H1 (cell line): ENCODE measurements at regions of chr20 and their contacts with region 1.

Region 1: GRCh38 chr20:49541733-49542513 is 26.0 kb downstream of the PTGIS start:
- DNase-seq: peak in 1 of 2 experiments; percentile 86
- H3K4me3 ChIP-seq: no peak overlapping the region
- H3K27ac ChIP-seq: no peak overlapping the region
- H3K4me1 ChIP-seq: no peaks in the 10 kb centered on the region
- H3K27me3 ChIP-seq: no peaks in the 10 kb centered on the region
- CTCF ChIP-seq: peak; percentile 60 to 99 (median 90)
- EP300 ChIP-seq: no peak
- POLR2A ChIP-seq: no peak
- RAD21 ChIP-seq: peak; percentile 93 to 94

Region 2: DNA sequence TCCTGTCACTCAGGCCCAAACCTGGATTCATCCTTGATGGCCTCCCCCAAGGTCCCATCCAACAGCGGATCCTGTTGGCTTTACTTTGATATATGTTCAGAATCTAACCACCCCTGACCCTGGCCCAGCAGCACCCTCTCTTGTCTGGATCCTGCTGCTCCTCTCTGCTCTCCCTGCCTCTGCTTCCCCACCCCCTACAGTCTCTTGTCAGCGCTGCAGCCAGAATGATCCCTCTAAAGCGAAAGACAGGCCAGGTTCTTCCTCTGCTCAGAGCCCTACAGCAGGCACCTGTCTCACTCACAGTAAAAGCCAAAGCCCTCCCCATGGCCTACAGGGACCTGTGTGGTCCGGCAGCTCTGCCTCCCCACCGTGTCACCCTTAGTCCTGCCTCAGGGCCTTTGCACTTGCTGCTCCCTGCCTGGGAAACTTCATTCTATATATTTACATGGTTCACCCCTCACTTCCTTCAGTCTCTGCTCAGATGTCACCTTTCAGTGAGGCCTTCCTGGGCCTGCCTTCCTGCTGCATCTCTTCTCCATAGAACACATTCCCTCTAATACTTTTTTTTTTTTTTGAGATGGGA is 22.1 kb before region 1 on chr20:
- CTCF ChIA-PET with region 1: interaction called, 21 read pairs
- POLR2A ChIA-PET with region 1: interaction called, 3 read pairs
- DNase-seq: no peak
- H3K4me3 ChIP-seq: no peak overlapping the region
- H3K27ac ChIP-seq: no peak overlapping the region
- H3K4me1 ChIP-seq: no peaks in the 10 kb centered on the region; a peak in 1 of 7 replicates
- H3K27me3 ChIP-seq: no peaks in the 10 kb centered on the region
- CTCF ChIP-seq: peak; percentile 20 to 38 (median 24)
- EP300 ChIP-seq: no peak
- POLR2A ChIP-seq: no peak
- RAD21 ChIP-seq: peak; percentile 21 to 33; a peak in 3 of 4 replicates

Region 3: GRCh38 chr20:49557449-49557848 is 15.5 kb after region 1 on chr20:
- CTCF ChIA-PET with region 1: interaction called, 40 read pairs
- POLR2A ChIA-PET with region 1: interaction called, 3 read pairs
- DNase-seq: no peak
- H3K4me3 ChIP-seq: no peak overlapping the region
- H3K27ac ChIP-seq: no peak overlapping the region
- H3K4me1 ChIP-seq: peaks cover 9 to 15% (median 12%) of the 10 kb centered on the region in 4 experiments; a peak in 6 of 7 replicates
- H3K27me3 ChIP-seq: no peaks in the 10 kb centered on the region
- CTCF ChIP-seq: no peak
- EP300 ChIP-seq: no peak
- POLR2A ChIP-seq: no peak
- RAD21 ChIP-seq: no peak

Region 4: GRCh38 chr20:49567421-49568334 is 25.8 kb after region 1 on chr20 and contains the start of gene PTGIS:
- CTCF ChIA-PET with region 1: interaction called, 16 read pairs
- POLR2A ChIA-PET with region 1: interaction called, 3 read pairs
- DNase-seq: peak in 1 of 2 experiments; percentile 83
- H3K4me3 ChIP-seq: peak within 1 kb of the TSS; percentile 59 to 99 (median 70)
- H3K27ac ChIP-seq: peak within 1 kb of the TSS; percentile 84
- H3K4me1 ChIP-seq: peaks cover 5 to 25% (median 16%) of the 10 kb centered on the region in 4 experiments
- H3K27me3 ChIP-seq: no peaks in the 10 kb centered on the region
- CTCF ChIP-seq: no peak
- EP300 ChIP-seq: no peak
- POLR2A ChIP-seq: peak in 1 of 2 experiments; percentile 39; a peak in 2 of 3 replicates
- RAD21 ChIP-seq: no peak
- total RNA-seq, gene PTGIS: 35.5 and 40.2 TPM in 2 replicates

Region 5: GRCh38 chr20:49583669-49584417 is 41.9 kb after region 1 on chr20:
- CTCF ChIA-PET with region 1: interaction called, 88 read pairs
- POLR2A ChIA-PET with region 1: no interaction called
- DNase-seq: no peak
- H3K4me3 ChIP-seq: no peak overlapping the region
- H3K27ac ChIP-seq: no peak overlapping the region
- H3K4me1 ChIP-seq: peaks cover 0 to 6% (median 3%) of the 10 kb centered on the region in 4 experiments; a peak in 5 of 7 replicates
- H3K27me3 ChIP-seq: no peaks in the 10 kb centered on the region
- CTCF ChIP-seq: no peak
- EP300 ChIP-seq: no peak
- POLR2A ChIP-seq: no peak
- RAD21 ChIP-seq: no peak